MCF 10A (cell line): ENCODE measurements at regions of chr6 and their contacts with region 1.

Region 1: GRCh38 chr6:34459899-34460593 is 5.8 kb upstream of the PACSIN1 start:
- DNase-seq: peak; percentile 63
- H3K4me3 Mint-ChIP-seq: no peak overlapping the region
- H3K27ac Mint-ChIP-seq: no peak overlapping the region
- H3K4me1 Mint-ChIP-seq: peaks cover 6% of the 10 kb centered on the region
- H3K27me3 Mint-ChIP-seq: no peaks in the 10 kb centered on the region
- CTCF ChIP-seq: peak; percentile 73

Region 2: GRCh38 chr6:34157851-34158250 is 302.2 kb before region 1 on chr6:
- CTCF ChIA-PET with region 1: no interaction called
- POLR2A ChIA-PET with region 1: no interaction called
- intact Hi-C with region 1: no loop called
- DNase-seq: no peak
- H3K4me3 Mint-ChIP-seq: no peak overlapping the region
- H3K27ac Mint-ChIP-seq: no peak overlapping the region
- H3K4me1 Mint-ChIP-seq: no peaks in the 10 kb centered on the region
- H3K27me3 Mint-ChIP-seq: peaks cover 33% of the 10 kb centered on the region
- CTCF ChIP-seq: no peak

Region 3: GRCh38 chr6:34189806-34190503 is 270.1 kb before region 1 on chr6:
- CTCF ChIA-PET with region 1: no interaction called
- POLR2A ChIA-PET with region 1: no interaction called
- intact Hi-C with region 1: no loop called
- DNase-seq: no peak
- H3K4me3 Mint-ChIP-seq: no peak overlapping the region
- H3K27ac Mint-ChIP-seq: no peak overlapping the region
- H3K4me1 Mint-ChIP-seq: no peaks in the 10 kb centered on the region
- H3K27me3 Mint-ChIP-seq: no peaks in the 10 kb centered on the region
- CTCF ChIP-seq: no peak

Region 4: DNA sequence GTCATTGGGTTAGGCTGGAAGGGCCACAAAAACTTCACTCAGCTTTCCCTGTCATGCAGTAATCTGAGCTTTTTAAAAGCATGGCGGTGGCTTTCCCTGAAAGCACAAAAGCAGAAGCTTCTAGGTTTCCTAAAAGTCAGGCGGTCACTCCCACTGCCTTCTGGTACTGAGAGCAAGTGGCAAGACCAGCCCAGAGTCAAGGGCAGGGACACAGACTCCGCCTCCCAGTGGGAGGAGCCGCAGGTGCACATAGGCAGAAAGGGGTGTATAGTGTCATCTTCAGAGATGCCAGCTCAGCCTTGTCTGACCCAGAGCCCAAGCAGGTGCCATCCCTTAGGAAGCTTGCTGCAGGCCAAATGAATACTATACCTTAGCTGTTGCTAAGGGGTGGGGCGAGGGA is 12.1 kb before region 1 on chr6:
- CTCF ChIA-PET with region 1: interaction called, 22 read pairs
- POLR2A ChIA-PET with region 1: interaction called, 3 read pairs
- intact Hi-C with region 1: no loop called
- DNase-seq: peak; percentile 27
- H3K4me3 Mint-ChIP-seq: no peak overlapping the region
- H3K27ac Mint-ChIP-seq: no peak overlapping the region
- H3K4me1 Mint-ChIP-seq: no peaks in the 10 kb centered on the region
- H3K27me3 Mint-ChIP-seq: no peaks in the 10 kb centered on the region
- CTCF ChIP-seq: no peak

Region 5: GRCh38 chr6:34526992-34527728 is 67.1 kb after region 1 on chr6:
- CTCF ChIA-PET with region 1: interaction called, 5 read pairs
- POLR2A ChIA-PET with region 1: no interaction called
- intact Hi-C with region 1: loop called (anchors 2 kb)
- DNase-seq: peak; percentile 90
- H3K4me3 Mint-ChIP-seq: no peak overlapping the region
- H3K27ac Mint-ChIP-seq: no peak overlapping the region
- H3K4me1 Mint-ChIP-seq: no peaks in the 10 kb centered on the region
- H3K27me3 Mint-ChIP-seq: no peaks in the 10 kb centered on the region
- CTCF ChIP-seq: peak; percentile 67

Region 6: DNA sequence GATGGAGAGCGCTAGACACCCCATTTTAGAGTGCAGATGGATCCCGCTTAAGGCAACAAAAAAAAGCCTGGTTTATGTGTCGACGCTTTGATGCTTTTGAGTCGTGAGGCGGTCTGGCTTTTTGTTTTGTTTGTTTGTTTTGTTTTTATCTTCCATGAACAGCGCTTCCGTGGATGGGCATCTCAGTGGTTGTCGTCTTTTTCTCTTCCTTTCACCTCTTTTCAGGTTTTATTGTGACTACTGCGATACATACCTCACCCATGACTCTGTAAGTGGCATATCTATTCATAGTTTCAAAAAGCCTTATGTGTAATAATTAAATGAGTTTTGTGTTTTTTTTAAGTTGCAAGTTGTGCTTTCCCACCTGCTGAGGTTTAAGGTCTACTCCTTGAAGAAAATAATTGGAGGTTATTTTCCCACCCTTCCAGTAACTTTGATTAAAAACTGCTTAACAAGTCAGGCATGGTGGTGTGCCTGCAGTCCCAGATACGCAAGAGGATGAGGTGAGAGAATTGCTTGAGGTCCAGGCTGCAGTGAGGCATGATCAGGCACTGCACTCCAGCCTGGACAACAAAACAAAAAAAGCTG is 297.7 kb after region 1 on chr6:
- CTCF ChIA-PET with region 1: interaction called, 11 read pairs
- POLR2A ChIA-PET with region 1: no interaction called
- intact Hi-C with region 1: no loop called
- DNase-seq: no peak
- H3K4me3 Mint-ChIP-seq: no peak overlapping the region
- H3K27ac Mint-ChIP-seq: no peak overlapping the region
- H3K4me1 Mint-ChIP-seq: peaks cover 6% of the 10 kb centered on the region
- H3K27me3 Mint-ChIP-seq: no peaks in the 10 kb centered on the region
- CTCF ChIP-seq: no peak

Region 7: GRCh38 chr6:34986845-34987246 is 526.8 kb after region 1 on chr6:
- CTCF ChIA-PET with region 1: interaction called, 3 read pairs
- POLR2A ChIA-PET with region 1: no interaction called
- intact Hi-C with region 1: loop called (anchors 5 kb)
- DNase-seq: peak; percentile 78
- H3K4me3 Mint-ChIP-seq: no peak overlapping the region
- H3K27ac Mint-ChIP-seq: no peak overlapping the region
- H3K4me1 Mint-ChIP-seq: no peaks in the 10 kb centered on the region
- H3K27me3 Mint-ChIP-seq: no peaks in the 10 kb centered on the region
- CTCF ChIP-seq: peak; percentile 84